ENCODE measurements at regions of chr2 and their contacts with region 1.

Region 1: DNA sequence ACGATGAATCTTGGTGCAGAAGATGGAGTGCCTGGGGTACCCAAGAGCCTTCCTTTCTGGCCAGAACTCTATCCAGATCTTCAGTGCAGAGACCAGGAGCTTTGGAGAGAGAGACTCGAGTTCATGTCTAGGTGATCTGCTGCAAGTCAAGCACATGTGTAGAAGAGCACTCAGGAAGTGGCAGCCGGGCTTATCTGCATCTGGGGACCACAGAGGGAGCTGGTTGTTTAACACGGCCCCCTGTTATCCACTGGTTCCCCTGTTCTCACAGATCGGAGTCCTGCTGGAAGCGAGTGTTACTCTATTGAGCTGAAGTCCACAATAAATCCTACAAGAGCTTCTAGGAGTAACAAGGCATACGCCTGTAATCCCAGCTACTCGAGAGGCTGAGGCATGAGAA is 128.3 kb downstream of the ACOXL start:
- DNase-seq: peak in 3 of 10 donors; percentile 37 to 52 (median 41)
- ATAC-seq: peak in 1 of 2 donors; percentile 22
- H3K4me3 Mint-ChIP-seq: peak overlapping the region; percentile 13 to 86 (median 75)
- H3K27ac Mint-ChIP-seq: peak overlapping the region; percentile 90 to 98 (median 96)
- H3K4me1 Mint-ChIP-seq: peaks cover 23 to 57% (median 50%) of the 10 kb centered on the region in 4 donors
- H3K27me3 Mint-ChIP-seq: no peaks in the 10 kb centered on the region

Region 2: GRCh38 chr2:110847651-110848050 is 13.0 kb before region 1 on chr2:
- POLR2A ChIA-PET with region 1: interaction called, 30 read pairs
- DNase-seq: no peak
- ATAC-seq: peak in 1 of 2 donors; percentile 2
- H3K4me3 Mint-ChIP-seq: peak overlapping the region in 8 of 10 donors; percentile 11 to 82 (median 68)
- H3K27ac Mint-ChIP-seq: peak overlapping the region; percentile 69 to 97 (median 93)
- H3K4me1 Mint-ChIP-seq: peaks cover 52 to 86% (median 74%) of the 10 kb centered on the region in 4 donors
- H3K27me3 Mint-ChIP-seq: no peaks in the 10 kb centered on the region

Measured in naive thymus-derived CD8-positive, alpha-beta T cell (primary cell).